Lower lobe of right lung (tissue), 2 donors: ENCODE measurements at regions of chr18 and their contacts with region 1.

Region 1: DNA sequence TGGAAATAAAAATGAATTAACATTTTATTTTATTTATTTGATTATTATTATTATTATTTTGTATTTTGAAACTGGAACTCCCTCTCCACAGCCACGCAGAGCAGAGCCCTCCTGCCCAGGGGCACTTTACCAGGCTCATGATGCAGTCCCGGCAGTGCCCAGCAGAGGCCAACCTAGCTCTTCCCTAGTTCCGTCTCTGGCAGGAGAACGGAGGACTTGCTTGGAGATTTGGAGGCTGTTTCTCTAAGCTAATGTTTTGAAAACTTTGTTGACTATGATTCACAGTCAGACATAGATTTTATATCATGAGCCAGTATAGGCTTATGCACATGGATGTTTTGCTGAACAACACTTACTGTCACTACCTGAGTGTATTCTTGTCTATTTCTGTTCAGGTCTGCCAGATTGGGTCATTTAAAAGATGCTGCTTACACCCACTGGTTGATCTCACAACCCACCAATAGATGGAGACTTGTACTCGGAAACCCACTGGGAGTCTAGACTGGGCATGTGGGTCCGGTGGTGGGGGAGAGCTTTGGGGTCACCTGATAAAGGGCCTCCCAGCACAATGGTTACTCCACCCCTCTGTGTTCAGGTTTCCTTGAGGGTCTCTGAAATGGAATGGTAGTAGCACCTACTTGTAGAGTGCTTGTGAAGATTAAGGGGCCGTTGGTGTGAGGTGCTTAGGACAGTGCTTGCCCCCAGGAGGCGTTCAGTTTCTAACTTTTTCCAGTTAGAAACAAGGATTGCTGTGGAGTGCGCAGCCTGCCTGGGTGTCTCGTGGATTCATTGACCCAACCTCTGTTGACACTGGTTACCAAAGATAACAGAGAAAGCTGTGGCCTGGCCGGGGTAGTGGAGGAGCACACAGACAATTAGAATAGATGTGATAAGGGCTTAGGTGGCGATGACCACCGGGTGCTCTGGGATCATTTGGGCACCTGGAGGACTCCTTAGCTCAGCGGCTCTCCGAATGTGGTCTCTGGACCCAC is 177.3 kb downstream of the HAUS1 start:
- DNase-seq: peak; percentile 66
- ATAC-seq: peak; percentile 89
- H3K4me3 ChIP-seq: no peak overlapping the region
- H3K27ac ChIP-seq: no peak overlapping the region
- H3K4me1 ChIP-seq: no peaks in the 10 kb centered on the region
- H3K27me3 ChIP-seq: no peaks in the 10 kb centered on the region
- CTCF ChIP-seq: peak; percentile 93

Region 2: GRCh38 chr18:46481048-46481846 is 199.8 kb after region 1 on chr18:
- intact Hi-C with region 1: loop called (anchors 10 kb)
- DNase-seq: no peak
- ATAC-seq: peak; percentile 39 to 59
- H3K4me3 ChIP-seq: no peak overlapping the region
- H3K27ac ChIP-seq: no peak overlapping the region
- H3K4me1 ChIP-seq: no peaks in the 10 kb centered on the region
- H3K27me3 ChIP-seq: peaks cover 6% of the 10 kb centered on the region
- CTCF ChIP-seq: peak; percentile 79

Region 3: DNA sequence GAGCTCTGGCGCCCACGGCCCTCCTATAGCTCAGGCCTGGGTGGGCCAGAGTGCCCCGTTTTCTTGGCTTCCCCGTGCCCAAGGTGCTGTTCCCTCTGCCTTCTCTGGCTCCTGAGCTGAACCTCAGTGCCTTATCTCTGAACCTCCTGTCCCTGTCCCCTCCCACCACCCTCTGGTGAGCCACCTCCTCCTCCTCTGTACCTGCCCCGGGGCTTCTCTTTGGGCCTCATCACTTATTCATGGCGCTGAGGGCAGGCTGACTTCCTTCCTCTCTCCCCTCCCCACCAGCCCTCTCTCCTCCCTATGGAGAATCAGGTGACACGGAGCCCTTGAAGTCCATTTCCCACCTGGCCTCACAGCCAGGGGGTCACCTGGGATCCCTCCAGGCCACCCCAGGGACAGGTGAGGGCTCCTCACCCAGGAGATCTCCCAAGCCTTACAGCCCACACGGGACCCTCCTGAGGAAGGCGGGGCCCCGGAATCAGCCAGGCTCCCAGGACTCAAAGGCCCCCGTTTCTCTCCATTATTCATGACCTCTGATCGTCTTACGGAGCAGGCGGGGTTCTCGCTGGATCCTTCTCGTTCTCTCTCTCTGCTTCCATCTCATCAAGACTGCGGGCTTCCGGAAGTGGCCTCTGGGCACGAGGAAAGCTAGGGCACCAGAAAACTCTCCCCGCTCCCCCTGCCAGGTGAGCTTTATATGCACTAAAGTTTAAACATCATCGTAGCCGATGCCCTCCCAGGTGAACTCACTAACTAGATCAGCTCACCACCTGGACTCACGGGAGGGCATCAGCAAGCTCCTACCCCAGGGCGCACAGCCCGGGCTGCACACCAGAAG is 375.9 kb after region 1 on chr18 and contains the start of gene LOXHD1:
- intact Hi-C with region 1: loop called (anchors 10 kb)
- DNase-seq: no peak
- ATAC-seq: no peak
- H3K4me3 ChIP-seq: no peak within 1 kb of the TSS
- H3K27ac ChIP-seq: no peak within 1 kb of the TSS
- H3K4me1 ChIP-seq: no peaks in the 10 kb centered on the region
- H3K27me3 ChIP-seq: no peaks in the 10 kb centered on the region
- CTCF ChIP-seq: no peak
- total RNA-seq, gene LOXHD1: 2.9 TPM

Region 4: GRCh38 chr18:46756559-46757201 is 475.2 kb after region 1 on chr18 and contains the start of gene ST8SIA5:
- intact Hi-C with region 1: no loop called
- DNase-seq: no peak
- ATAC-seq: peak in 1 of 2 donors; percentile 9
- H3K4me3 ChIP-seq: peak within 1 kb of the TSS; percentile 28
- H3K27ac ChIP-seq: no peak within 1 kb of the TSS
- H3K4me1 ChIP-seq: peaks cover 22% of the 10 kb centered on the region
- H3K27me3 ChIP-seq: peaks cover 66% of the 10 kb centered on the region
- CTCF ChIP-seq: no peak
- total RNA-seq, gene ST8SIA5: not detected